Left cardiac atrium (tissue), 4 donors: ENCODE measurements at regions of chr1 and their contacts with region 1.

Region 1: DNA sequence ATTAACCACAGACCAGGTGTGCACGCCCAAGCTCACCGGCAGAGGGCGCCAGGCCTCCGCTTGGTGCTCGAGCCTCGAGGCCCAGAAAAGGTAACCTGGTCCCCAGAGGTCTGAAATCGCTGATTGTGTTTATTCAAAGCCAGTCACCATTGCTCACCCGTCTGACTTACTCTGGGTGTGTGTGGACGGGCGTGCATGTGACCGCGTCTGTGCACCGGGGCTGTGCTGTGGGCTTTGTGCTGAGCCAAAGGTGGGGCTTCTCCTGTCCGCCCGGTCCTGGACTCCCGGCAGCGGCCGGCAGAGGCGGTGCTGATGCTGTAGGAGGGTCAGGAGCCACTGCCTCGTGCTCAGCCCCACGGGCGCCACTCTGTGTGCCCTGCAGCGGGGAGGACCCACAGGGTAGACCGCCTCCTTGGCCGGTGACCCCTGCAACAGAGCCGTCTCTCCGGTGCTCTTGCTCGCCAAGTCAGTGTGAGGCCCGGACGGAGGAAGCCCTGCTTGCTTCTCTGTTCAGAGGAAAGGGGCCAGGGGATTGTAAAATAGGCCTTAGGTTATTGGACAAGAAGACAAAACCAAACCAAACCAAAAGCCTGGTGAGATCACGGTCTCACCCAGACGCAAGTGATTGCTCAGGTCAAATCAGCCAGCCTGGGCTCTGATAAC is 32.0 kb upstream of the BTG2 start:
- DNase-seq: peak; percentile 89
- ATAC-seq: peak; percentile 68 to 74

Region 2: DNA sequence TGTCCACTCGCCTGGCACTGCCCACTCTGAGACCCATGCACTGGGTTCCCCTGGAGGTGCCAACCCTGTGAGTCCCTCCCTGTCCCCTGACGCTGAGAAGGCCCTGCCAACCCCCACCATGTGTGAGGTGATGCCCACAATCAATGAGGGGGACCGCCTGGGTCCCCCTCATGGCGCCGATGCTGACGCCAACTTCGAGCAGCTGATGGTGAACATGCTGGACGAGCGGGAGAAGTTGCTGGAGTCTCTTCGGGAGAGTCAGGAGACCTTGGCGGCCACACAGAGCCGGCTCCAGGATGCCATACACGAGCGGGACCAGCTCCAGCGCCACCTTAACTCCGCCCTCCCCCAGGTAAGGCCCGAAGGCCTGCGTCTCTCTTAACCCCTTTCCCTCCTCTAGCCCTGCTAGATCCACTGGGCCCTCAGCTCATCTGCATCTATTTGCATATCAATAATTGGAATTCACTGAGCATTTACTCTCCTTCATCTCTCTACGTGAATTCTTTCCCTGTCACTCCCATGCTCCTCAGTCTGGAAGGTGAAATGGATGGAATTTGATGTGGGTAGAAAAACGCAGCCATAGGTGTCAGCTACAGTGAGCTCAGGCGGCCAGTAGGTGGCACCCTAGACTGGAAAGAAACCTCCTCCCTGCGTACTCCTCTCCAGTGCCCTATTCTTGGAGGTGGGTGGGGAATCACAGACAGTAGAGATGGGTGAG is 234.3 kb before region 1 on chr1:
- intact Hi-C with region 1: loop called in 1 of 2 experiments (anchors 5 kb)
- DNase-seq: peak; percentile 82
- ATAC-seq: peak; percentile 85 to 86

Region 3: GRCh38 chr1:203144661-203145060 is 128.7 kb before region 1 on chr1:
- intact Hi-C with region 1: no loop called
- DNase-seq: no peak
- ATAC-seq: peak in 1 of 2 donors; percentile 17

Region 4: DNA sequence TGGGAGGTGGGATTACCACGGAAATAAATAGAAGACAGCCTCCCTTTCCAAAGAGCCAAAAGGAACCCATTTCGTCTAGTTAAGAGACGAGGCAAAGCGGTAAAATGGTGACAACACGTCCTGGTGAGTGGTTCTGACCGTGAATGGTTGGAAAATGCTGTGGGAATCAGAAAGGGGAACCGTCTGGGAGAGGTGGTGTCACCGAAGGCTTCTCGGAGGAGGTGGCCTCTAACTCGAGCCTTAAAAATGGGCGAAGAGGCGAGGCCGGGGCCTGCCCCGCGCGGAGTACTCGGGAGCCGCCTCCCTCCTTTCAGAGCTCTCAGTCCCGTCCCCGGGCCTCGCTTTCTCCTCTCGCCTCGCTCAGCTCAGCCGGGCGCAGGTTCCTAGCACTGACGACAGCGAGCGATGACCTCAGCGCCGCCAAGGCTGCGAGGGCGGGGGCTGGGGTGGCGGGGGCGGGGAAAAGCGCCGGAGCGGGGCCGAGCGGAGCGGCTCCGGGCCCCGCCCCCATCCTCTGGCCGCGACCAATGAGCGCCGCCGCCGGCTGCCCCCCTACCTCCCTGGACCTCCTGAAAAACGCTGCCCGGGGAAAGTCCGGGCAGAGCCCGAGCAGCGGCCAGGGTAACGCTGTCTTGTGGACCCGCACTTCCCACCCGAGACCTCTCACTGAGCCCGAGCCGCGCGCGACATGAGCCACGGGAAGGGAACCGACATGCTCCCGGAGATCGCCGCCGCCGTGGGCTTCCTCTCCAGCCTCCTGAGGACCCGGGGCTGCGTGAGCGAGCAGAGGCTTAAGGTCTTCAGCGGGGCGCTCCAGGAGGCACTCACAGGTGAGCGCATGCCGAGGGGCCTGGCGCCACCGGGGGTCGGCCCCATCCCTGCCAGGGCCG is 31.8 kb after region 1 on chr1 and contains the start of gene BTG2:
- intact Hi-C with region 1: loop called (anchors 2 to 5 kb)
- DNase-seq: peak; percentile 94
- ATAC-seq: peak; percentile 91 to 94
- total RNA-seq, gene BTG2: 187 to 259 TPM

Region 5: DNA sequence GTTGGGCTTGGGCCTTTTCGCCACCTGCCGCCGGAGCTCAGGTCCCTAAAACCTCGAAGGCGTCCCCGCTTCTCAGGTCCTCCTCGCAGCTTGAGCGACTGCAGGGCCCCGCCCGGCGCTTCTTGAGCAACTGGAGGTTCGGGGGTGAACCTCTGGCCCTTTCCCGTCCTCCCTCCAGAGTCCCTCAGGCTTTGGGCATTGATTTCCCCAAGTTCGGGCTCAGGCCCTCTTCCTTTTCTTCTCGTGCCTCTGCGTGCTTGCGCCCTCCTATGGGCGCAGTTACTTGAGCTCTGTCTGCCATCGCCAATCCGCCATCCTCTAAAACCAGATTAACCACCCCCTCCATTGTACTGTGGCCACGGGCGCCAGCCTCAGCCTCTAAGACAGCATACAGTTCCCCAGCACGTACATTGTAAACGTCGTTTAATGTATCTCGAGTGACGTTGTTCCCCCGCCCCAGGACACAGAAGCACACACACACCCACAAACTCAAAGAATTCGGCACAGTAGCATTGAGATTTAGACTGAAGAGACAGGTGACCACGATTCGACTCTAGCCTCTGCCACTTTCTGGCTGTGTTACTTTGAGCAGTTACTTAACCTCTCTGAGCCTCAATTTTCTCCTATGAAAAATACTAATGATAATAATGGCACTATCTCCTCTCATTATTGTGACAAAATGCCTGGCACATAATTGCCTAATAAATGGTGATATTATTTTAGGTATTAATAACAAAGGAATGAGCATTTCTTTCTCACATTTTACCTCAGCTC is 54.5 kb after region 1 on chr1:
- intact Hi-C with region 1: loop called in 1 of 2 experiments (anchors 2 kb)
- DNase-seq: no peak
- ATAC-seq: peak; percentile 48

Region 6: GRCh38 chr1:203340112-203340804 is 66.9 kb after region 1 on chr1:
- intact Hi-C with region 1: loop called (anchors 1 to 2 kb)
- DNase-seq: peak; percentile 71
- ATAC-seq: peak; percentile 81 to 89

Region 7: DNA sequence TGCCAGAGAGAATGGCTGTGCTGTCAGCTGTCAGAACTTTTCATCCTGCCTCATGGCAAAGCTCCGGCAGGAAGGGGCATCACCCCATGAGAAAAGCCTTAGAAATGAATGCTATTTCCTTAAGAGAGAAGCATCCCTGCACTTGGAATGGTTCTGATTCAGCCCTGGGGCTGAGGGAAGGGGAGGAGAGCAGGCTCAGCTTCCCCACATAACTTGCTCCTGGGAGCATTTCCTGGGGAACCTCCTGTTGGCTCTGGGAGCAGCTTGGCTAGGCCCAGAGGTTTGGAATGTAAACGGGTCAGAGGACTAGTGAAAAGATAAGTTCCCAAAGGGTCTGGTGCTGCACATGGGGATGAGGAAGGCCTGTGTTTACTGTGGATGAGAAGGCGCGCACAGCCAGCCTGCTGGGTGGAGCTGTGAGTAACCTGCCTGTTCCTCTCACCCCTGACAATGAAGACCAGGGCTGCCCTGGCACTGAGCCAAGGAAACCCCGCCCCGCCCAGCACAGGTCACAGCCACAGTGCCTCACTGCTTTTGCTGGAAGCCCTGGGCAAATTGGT is 207.3 kb after region 1 on chr1:
- intact Hi-C with region 1: loop called in 1 of 2 experiments (anchors 10 kb)
- DNase-seq: peak; percentile 46
- ATAC-seq: peak; percentile 55 to 81